Gastrocnemius medialis (tissue), 4 donors: ENCODE measurements at regions of chr6 and their contacts with region 1.

Region 1: GRCh38 chr6:116279260-116280063 is at the start of gene TSPYL1:
- DNase-seq: peak; percentile 93 to 94
- ATAC-seq: peak; percentile 98
- H3K4me3 ChIP-seq: peak within 1 kb of the TSS; percentile 69 to 99 (median 86)
- H3K27ac ChIP-seq: peak within 1 kb of the TSS; percentile 90 to 99 (median 96)
- H3K4me1 ChIP-seq: peaks cover 54 to 59% of the 10 kb centered on the region in 2 donors
- H3K27me3 ChIP-seq: no peaks in the 10 kb centered on the region
- CTCF ChIP-seq: peak in 1 of 5 experiments; percentile 9
- POLR2A ChIP-seq: peak; percentile 92 to 96
- total RNA-seq, gene TSPYL1: 74.2 to 160 (median 81.2) TPM

Region 2: DNA sequence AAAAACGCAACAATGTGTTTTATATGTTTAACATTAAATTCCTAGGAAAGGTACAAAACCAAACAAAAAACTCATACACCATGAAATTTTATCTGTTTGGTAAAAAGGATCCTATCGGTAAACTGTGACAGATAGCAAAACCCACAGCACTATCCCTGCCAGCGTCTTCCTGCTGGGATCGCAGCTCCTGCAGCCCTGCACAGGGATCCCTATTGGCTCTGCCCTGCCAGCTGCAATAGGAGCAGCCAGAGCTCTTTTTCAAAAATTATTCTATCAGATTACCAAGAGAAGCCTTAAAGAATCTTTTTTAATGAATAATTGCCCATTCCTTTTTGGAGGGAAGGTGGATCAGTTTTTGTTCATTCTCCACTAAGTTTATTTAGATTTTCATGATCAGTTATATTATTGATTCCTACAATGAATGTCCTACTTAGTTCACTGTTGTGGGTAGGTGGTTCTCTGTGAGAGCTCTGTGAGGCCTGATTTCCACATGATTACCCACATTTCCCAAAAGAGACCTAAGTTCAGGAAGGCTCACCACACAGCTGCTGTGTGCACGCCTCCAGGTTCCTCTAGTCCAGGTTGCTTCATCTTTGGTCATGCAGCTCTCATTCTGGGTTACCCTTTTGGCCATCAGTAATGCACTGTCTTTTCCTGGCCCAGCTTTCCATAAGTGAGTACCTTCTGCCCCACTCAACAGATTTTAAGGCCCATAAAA is 512.6 kb before region 1 on chr6:
- in situ Hi-C with region 1: no loop called
- intact Hi-C with region 1: no loop called
- DNase-seq: no peak
- ATAC-seq: no peak
- H3K4me3 ChIP-seq: no peak overlapping the region
- H3K27ac ChIP-seq: no peak overlapping the region
- H3K4me1 ChIP-seq: no peaks in the 10 kb centered on the region
- H3K27me3 ChIP-seq: no peaks in the 10 kb centered on the region
- CTCF ChIP-seq: no peak
- POLR2A ChIP-seq: no peak

Region 3: GRCh38 chr6:116253505-116254296 is 25.8 kb before region 1 on chr6 and contains the start of gene TSPYL4:
- in situ Hi-C with region 1: no loop called
- intact Hi-C with region 1: loop called (anchors 1 kb)
- DNase-seq: peak; percentile 78 to 83
- ATAC-seq: peak; percentile 98 to 99
- H3K4me3 ChIP-seq: peak within 1 kb of the TSS; percentile 85 to 93 (median 91)
- H3K27ac ChIP-seq: peak within 1 kb of the TSS; percentile 76 to 85 (median 81)
- H3K4me1 ChIP-seq: peaks cover 22 to 30% of the 10 kb centered on the region in 2 donors
- H3K27me3 ChIP-seq: no peaks in the 10 kb centered on the region
- CTCF ChIP-seq: no peak
- POLR2A ChIP-seq: peak; percentile 40 to 67
- total RNA-seq, gene TSPYL4: 2.8 to 4.8 (median 3.8) TPM

Region 4: GRCh38 chr6:116409756-116410155 is 130.3 kb after region 1 on chr6:
- in situ Hi-C with region 1: no loop called
- intact Hi-C with region 1: loop called (anchors 10 kb)
- DNase-seq: no peak
- ATAC-seq: no peak
- H3K4me3 ChIP-seq: no peak overlapping the region
- H3K27ac ChIP-seq: peak overlapping the region; percentile 70 to 85 (median 78)
- H3K4me1 ChIP-seq: peaks cover 65 to 75% of the 10 kb centered on the region in 2 donors
- H3K27me3 ChIP-seq: no peaks in the 10 kb centered on the region
- CTCF ChIP-seq: no peak
- POLR2A ChIP-seq: no peak

Region 5: GRCh38 chr6:116561377-116562018 is 282.0 kb after region 1 on chr6:
- in situ Hi-C with region 1: loop called in 1 of 4 experiments (anchors 10 kb)
- intact Hi-C with region 1: no loop called
- DNase-seq: peak; percentile 32 to 54
- ATAC-seq: peak; percentile 64 to 80
- H3K4me3 ChIP-seq: peak overlapping the region; percentile 31 to 51 (median 38)
- H3K27ac ChIP-seq: peak overlapping the region in 2 of 4 donors; percentile 50 to 55
- H3K4me1 ChIP-seq: peaks cover 0 to 23% of the 10 kb centered on the region in 2 donors
- H3K27me3 ChIP-seq: no peaks in the 10 kb centered on the region
- CTCF ChIP-seq: peak; percentile 71 to 94 (median 85)
- POLR2A ChIP-seq: no peak